GM12878 (cell line): ENCODE measurements at regions of chr10 and their contacts with region 1.

Region 1: DNA sequence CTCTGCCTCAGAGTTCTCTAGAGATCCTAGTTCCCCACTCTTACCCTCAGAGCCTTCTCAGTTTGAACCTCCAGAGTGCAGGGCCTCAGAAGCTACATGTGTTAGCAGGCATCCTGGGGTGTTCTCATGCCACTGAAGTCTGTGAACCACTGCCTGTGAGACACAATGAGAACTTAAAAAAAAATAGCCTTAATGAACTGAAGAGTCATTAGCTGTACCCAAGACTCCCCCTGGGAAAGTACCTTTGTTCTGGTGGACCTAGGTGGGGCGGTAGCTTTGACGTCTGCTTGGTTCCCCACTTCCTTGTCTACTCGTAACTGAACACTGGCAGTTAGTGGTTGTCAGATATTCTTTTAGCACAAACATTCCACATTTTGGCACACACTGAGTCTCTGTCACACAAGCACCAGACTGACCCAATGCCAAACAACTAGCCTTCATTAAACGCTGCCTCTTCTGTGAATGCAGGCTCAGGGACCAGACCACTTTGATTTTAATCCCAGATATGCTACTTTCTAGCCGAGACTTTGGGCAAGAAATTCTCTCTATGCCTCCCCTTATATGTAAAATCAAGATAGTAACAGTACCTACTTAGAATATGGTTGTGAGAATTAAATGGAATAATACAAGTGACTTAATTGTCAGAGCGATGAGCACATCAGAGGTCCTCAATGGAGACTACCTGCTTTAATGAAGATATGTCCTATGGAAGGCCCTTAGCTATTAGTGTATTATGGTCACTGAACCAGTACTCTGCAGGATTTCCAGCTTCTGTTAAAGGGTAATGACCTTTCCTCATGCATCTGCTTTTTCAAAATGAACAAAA is 75.3 kb upstream of the CC2D2B start:
- DNase-seq: peak; percentile 99
- ATAC-seq: peak; percentile 87
- H3K4me3 ChIP-seq: no peak overlapping the region
- H3K27ac ChIP-seq: peak overlapping the region; percentile 98
- H3K4me1 ChIP-seq: peaks cover 71% of the 10 kb centered on the region
- H3K27me3 ChIP-seq: no peaks in the 10 kb centered on the region
- CTCF ChIP-seq: no peak
- EP300 ChIP-seq: peak; percentile 99 to 100
- POLR2A ChIP-seq: peak; percentile 37
- RAD21 ChIP-seq: peak; percentile 36; the same call in 1 of the 2 replicates

Region 2: GRCh38 chr10:95767884-95768556 is 64.4 kb before region 1 on chr10:
- CTCF ChIA-PET with region 1: interaction called, 3 read pairs
- POLR2A ChIA-PET with region 1: interaction called, 313 read pairs
- RAD21 ChIA-PET with region 1: interaction called, 374 read pairs
- SMC1A ChIA-PET with region 1: interaction called, 3 read pairs
- in situ Hi-C with region 1: loop called (anchors 10 kb)
- intact Hi-C with region 1: no loop called
- DNase-seq: no peak
- ATAC-seq: peak; percentile 87
- H3K4me3 ChIP-seq: peak overlapping the region; percentile 19; the same call in 1 of the 2 replicates
- H3K27ac ChIP-seq: peak overlapping the region; percentile 94
- H3K4me1 ChIP-seq: peaks cover 34% of the 10 kb centered on the region
- H3K27me3 ChIP-seq: no peaks in the 10 kb centered on the region
- CTCF ChIP-seq: no peak
- EP300 ChIP-seq: peak; percentile 33 to 73; a peak in 3 of 4 replicates
- POLR2A ChIP-seq: no peak
- RAD21 ChIP-seq: peak; percentile 28; the same call in 1 of the 2 replicates

Region 3: GRCh38 chr10:95783741-95784140 is 48.7 kb before region 1 on chr10:
- CTCF ChIA-PET with region 1: interaction called, 99 read pairs
- POLR2A ChIA-PET with region 1: interaction called, 451 read pairs
- RAD21 ChIA-PET with region 1: interaction called, 268 read pairs
- SMC1A ChIA-PET with region 1: interaction called, 795 read pairs
- in situ Hi-C with region 1: no loop called
- intact Hi-C with region 1: loop called (anchors 1 kb)
- DNase-seq: peak; percentile 94
- ATAC-seq: peak; percentile 50
- H3K4me3 ChIP-seq: no peak overlapping the region
- H3K27ac ChIP-seq: peak overlapping the region; percentile 99
- H3K4me1 ChIP-seq: peaks cover 79% of the 10 kb centered on the region
- H3K27me3 ChIP-seq: no peaks in the 10 kb centered on the region
- CTCF ChIP-seq: no peak
- EP300 ChIP-seq: peak; percentile 93 to 99
- POLR2A ChIP-seq: no peak
- RAD21 ChIP-seq: peak; percentile 8; the same call in 1 of the 2 replicates

Region 4: GRCh38 chr10:95792874-95793285 is 39.5 kb before region 1 on chr10:
- CTCF ChIA-PET with region 1: interaction called, 99 read pairs
- POLR2A ChIA-PET with region 1: interaction called, 451 read pairs
- RAD21 ChIA-PET with region 1: interaction called, 268 read pairs
- SMC1A ChIA-PET with region 1: interaction called, 795 read pairs
- in situ Hi-C with region 1: loop called (anchors 5 kb)
- intact Hi-C with region 1: loop called (anchors 1 kb)
- DNase-seq: peak; percentile 77
- ATAC-seq: peak; percentile 31
- H3K4me3 ChIP-seq: peak overlapping the region; percentile 18; the same call in 1 of the 2 replicates
- H3K27ac ChIP-seq: peak overlapping the region; percentile 93
- H3K4me1 ChIP-seq: peaks cover 64% of the 10 kb centered on the region
- H3K27me3 ChIP-seq: no peaks in the 10 kb centered on the region
- CTCF ChIP-seq: no peak
- EP300 ChIP-seq: peak; percentile 54; a peak in 1 of 4 replicates
- POLR2A ChIP-seq: no peak
- RAD21 ChIP-seq: 0 out of 2 replicates have a peak, but pooled peaks have one; percentile 4

Region 5: DNA sequence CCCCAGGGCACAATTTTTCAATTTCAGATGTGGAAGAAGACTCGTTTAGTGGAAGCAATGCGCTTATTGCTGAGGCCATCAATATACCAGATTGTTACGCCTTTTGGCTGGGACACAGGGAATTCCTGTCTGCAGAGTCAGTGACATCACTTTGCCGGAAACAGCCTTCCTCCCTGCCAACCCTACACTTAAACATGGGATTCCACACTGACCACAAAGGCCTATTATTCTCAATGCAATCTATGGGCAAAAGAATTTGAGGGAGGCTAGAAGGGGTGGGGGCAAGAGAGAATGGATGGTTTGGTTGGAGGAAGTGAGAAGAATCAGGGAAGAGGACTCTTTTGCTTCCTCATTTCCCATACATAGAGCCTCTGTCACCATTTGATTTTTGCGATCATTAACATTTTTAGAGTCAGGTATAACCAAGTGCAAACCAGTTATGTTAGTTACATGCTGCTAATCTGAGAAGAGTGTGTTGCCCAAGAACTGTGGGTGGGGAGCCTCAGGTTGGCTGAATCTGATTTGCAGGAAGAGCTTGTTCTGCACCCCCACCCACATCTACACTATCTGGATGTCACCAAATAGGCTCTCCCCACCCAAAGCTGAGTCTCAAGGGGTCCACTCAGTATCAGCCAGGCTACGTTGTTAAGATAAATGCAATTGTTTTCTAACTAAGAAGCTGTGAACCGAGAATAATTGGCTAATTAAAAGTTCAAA is 18.3 kb before region 1 on chr10:
- CTCF ChIA-PET with region 1: interaction called, 32 read pairs
- POLR2A ChIA-PET with region 1: interaction called, 176 read pairs
- RAD21 ChIA-PET with region 1: interaction called, 260 read pairs
- SMC1A ChIA-PET with region 1: interaction called, 359 read pairs
- in situ Hi-C with region 1: no loop called
- intact Hi-C with region 1: no loop called
- DNase-seq: no peak
- ATAC-seq: peak; percentile 6; the same call in 1 of the 3 replicates
- H3K4me3 ChIP-seq: no peak overlapping the region
- H3K27ac ChIP-seq: peak overlapping the region; percentile 26; the same call in 1 of the 2 replicates
- H3K4me1 ChIP-seq: peaks cover 44% of the 10 kb centered on the region
- H3K27me3 ChIP-seq: no peaks in the 10 kb centered on the region
- CTCF ChIP-seq: no peak
- EP300 ChIP-seq: no peak
- POLR2A ChIP-seq: peak; percentile 30; the same call in 1 of the 2 replicates
- RAD21 ChIP-seq: no peak

Region 6: DNA sequence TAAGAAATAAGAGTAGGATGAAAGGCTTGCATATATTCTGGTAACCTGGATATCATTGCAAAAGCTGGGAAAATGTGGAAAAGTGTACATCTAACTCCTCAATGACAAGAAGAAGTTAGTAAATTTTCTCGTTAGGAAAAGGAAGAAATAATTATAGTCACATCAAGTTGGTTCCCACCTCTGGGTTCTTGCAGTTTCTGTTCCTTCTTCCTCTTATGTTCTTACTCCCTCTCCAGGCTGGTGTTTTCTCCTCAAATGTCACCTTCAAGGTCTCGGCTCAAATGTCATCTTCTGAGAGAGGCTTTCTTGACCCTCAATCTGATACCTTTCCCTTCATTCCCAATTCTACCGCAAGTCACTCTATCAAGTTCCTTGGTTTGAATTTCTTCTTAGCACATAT is 12.1 kb before region 1 on chr10:
- CTCF ChIA-PET with region 1: interaction called, 32 read pairs
- POLR2A ChIA-PET with region 1: interaction called, 176 read pairs
- RAD21 ChIA-PET with region 1: interaction called, 260 read pairs
- SMC1A ChIA-PET with region 1: interaction called, 359 read pairs
- in situ Hi-C with region 1: no loop called
- intact Hi-C with region 1: loop called (anchors 1 kb)
- DNase-seq: no peak
- ATAC-seq: peak; percentile 76
- H3K4me3 ChIP-seq: no peak overlapping the region
- H3K27ac ChIP-seq: peak overlapping the region; percentile 85
- H3K4me1 ChIP-seq: peaks cover 41% of the 10 kb centered on the region
- H3K27me3 ChIP-seq: no peaks in the 10 kb centered on the region
- CTCF ChIP-seq: peak in 1 of 3 experiments; percentile 35; a peak in 2 of 6 replicates
- EP300 ChIP-seq: peak in 1 of 2 experiments; percentile 60; a peak in 2 of 4 replicates
- POLR2A ChIP-seq: no peak
- RAD21 ChIP-seq: peak; percentile 51

Region 7: GRCh38 chr10:95963226-95963990 is 131.0 kb after region 1 on chr10:
- CTCF ChIA-PET with region 1: no interaction called
- POLR2A ChIA-PET with region 1: no interaction called
- RAD21 ChIA-PET with region 1: no interaction called
- SMC1A ChIA-PET with region 1: no interaction called
- in situ Hi-C with region 1: no loop called
- intact Hi-C with region 1: no loop called
- DNase-seq: no peak
- ATAC-seq: peak; percentile 65
- H3K4me3 ChIP-seq: no peak overlapping the region; the same call in 1 of the 2 replicates
- H3K27ac ChIP-seq: peak overlapping the region; percentile 56; the same call in 1 of the 2 replicates
- H3K4me1 ChIP-seq: peaks cover 15% of the 10 kb centered on the region
- H3K27me3 ChIP-seq: no peaks in the 10 kb centered on the region
- CTCF ChIP-seq: no peak
- EP300 ChIP-seq: no peak
- POLR2A ChIP-seq: no peak
- RAD21 ChIP-seq: no peak

Region 8: GRCh38 chr10:96056787-96057186 is 224.4 kb after region 1 on chr10:
- CTCF ChIA-PET with region 1: no interaction called
- POLR2A ChIA-PET with region 1: no interaction called
- RAD21 ChIA-PET with region 1: no interaction called
- SMC1A ChIA-PET with region 1: no interaction called
- in situ Hi-C with region 1: no loop called
- intact Hi-C with region 1: no loop called
- DNase-seq: no peak
- ATAC-seq: no peak
- H3K4me3 ChIP-seq: no peak overlapping the region
- H3K27ac ChIP-seq: no peak overlapping the region
- H3K4me1 ChIP-seq: no peaks in the 10 kb centered on the region
- H3K27me3 ChIP-seq: no peaks in the 10 kb centered on the region
- CTCF ChIP-seq: no peak
- EP300 ChIP-seq: no peak
- POLR2A ChIP-seq: no peak
- RAD21 ChIP-seq: no peak